Gastrocnemius medialis (tissue), 4 donors: ENCODE measurements at regions of chr2 and their contacts with region 1.

Region 1: DNA sequence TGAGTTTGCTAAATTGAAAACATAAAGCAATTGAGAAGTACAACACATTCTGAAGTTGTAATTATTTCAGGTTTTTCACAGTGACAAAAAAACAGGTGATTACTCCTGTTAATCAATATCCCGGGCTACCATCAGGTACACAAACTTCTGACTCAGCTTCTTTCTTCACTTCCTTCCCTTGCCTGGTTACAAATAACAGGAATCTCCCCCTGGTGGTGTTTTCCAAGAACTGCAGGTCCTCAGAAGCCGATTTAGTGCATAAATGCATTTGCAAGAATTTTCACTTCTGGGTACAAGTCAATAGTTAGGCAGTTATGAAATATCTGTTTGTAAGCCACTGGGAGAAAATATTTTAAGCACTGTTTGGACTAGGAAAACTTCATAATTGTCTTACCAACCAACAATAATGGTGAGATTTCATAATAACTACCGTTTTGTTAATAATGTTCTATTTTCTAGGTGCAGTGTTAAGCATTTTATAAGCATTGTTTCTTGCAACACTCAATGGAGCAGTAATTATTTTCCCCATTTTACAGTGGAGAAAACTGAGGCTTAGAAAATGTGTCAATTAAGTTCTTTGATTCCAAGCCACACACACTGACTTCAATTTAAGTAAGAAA is 12.4 kb upstream of the GMCL1 start:
- DNase-seq: peak; percentile 65 to 77
- ATAC-seq: peak; percentile 81 to 89
- H3K4me3 ChIP-seq: no peak overlapping the region
- H3K27ac ChIP-seq: no peak overlapping the region
- H3K4me1 ChIP-seq: no peaks in the 10 kb centered on the region
- H3K27me3 ChIP-seq: no peaks in the 10 kb centered on the region
- CTCF ChIP-seq: peak; percentile 93 to 98 (median 95)
- POLR2A ChIP-seq: no peak

Region 2: DNA sequence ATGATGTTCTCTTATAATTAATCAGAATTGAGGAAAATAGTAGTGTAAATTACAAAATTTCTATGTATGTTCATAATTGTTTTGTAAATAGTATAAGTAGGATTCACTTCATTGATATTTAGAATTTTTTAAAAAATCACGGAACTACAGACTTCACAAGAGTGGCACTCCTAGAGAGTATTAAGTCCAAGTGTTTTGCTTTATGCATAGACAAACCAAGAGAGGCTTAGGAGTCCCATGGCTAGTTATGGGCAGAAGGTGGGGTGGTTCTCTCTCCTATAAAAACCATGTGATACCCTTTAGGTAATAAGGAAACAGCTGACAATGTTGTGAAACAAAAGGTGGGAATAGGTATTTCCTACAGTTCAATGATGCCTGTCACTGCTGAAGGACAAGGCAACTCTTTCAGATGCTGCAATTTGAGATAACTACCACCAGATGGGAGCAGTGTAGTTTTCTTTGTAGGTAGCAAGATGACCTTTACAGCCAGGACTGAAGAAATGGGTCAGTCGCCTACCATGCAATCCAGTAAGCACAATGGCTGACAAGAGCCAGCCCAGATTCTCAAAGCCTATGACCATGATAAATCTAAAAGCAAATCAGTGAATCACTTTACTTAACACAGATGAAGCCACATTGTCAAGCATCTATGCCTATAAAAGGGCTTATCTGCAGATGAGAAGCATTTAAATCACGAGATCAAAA is 257.4 kb before region 1 on chr2:
- in situ Hi-C with region 1: loop called in 3 of 4 experiments (anchors 5 to 25 kb)
- intact Hi-C with region 1: loop called (anchors 5 kb)
- DNase-seq: peak in 1 of 2 donors; percentile 53
- ATAC-seq: peak; percentile 95 to 97
- H3K4me3 ChIP-seq: no peak overlapping the region
- H3K27ac ChIP-seq: peak overlapping the region in 3 of 4 donors; percentile 10 to 33 (median 11)
- H3K4me1 ChIP-seq: peaks cover 20 to 54% of the 10 kb centered on the region in 2 donors
- H3K27me3 ChIP-seq: no peaks in the 10 kb centered on the region
- CTCF ChIP-seq: peak; percentile 75 to 85 (median 78)
- POLR2A ChIP-seq: no peak

Region 3: GRCh38 chr2:69565431-69565839 is 251.6 kb before region 1 on chr2:
- in situ Hi-C with region 1: loop called in 2 of 4 experiments (anchors 25 kb)
- intact Hi-C with region 1: no loop called
- DNase-seq: peak in 1 of 2 donors; percentile 22
- ATAC-seq: peak in 1 of 2 donors; percentile 35
- H3K4me3 ChIP-seq: no peak overlapping the region
- H3K27ac ChIP-seq: no peak overlapping the region
- H3K4me1 ChIP-seq: peaks cover 27 to 80% of the 10 kb centered on the region in 2 donors
- H3K27me3 ChIP-seq: no peaks in the 10 kb centered on the region
- CTCF ChIP-seq: peak; percentile 28 to 67 (median 45)
- POLR2A ChIP-seq: no peak

Region 4: GRCh38 chr2:69724540-69725159 is 92.4 kb before region 1 on chr2:
- in situ Hi-C with region 1: loop called (anchors 5 kb)
- intact Hi-C with region 1: loop called (anchors 1 kb)
- DNase-seq: peak; percentile 64 to 73
- ATAC-seq: peak; percentile 92 to 96
- H3K4me3 ChIP-seq: peak overlapping the region; percentile 33 to 53 (median 40)
- H3K27ac ChIP-seq: no peak overlapping the region
- H3K4me1 ChIP-seq: peaks cover 5 to 7% of the 10 kb centered on the region in 2 donors
- H3K27me3 ChIP-seq: no peaks in the 10 kb centered on the region
- CTCF ChIP-seq: peak; percentile 94 to 96 (median 96)
- POLR2A ChIP-seq: no peak

Region 5: GRCh38 chr2:69741619-69742466 is 75.2 kb before region 1 on chr2 and contains the start of gene ANXA4:
- in situ Hi-C with region 1: no loop called
- intact Hi-C with region 1: loop called (anchors 5 kb)
- DNase-seq: peak; percentile 82
- ATAC-seq: peak; percentile 84 to 92
- H3K4me3 ChIP-seq: peak within 1 kb of the TSS; percentile 73 to 96 (median 88)
- H3K27ac ChIP-seq: peak within 1 kb of the TSS; percentile 84 to 98 (median 92)
- H3K4me1 ChIP-seq: peaks cover 14 to 19% of the 10 kb centered on the region in 2 donors
- H3K27me3 ChIP-seq: no peaks in the 10 kb centered on the region
- CTCF ChIP-seq: peak in 2 of 5 experiments; percentile 10 to 19
- POLR2A ChIP-seq: peak; percentile 87 to 88
- total RNA-seq, gene ANXA4: 10.7 to 17.0 (median 15.8) TPM

Region 6: DNA sequence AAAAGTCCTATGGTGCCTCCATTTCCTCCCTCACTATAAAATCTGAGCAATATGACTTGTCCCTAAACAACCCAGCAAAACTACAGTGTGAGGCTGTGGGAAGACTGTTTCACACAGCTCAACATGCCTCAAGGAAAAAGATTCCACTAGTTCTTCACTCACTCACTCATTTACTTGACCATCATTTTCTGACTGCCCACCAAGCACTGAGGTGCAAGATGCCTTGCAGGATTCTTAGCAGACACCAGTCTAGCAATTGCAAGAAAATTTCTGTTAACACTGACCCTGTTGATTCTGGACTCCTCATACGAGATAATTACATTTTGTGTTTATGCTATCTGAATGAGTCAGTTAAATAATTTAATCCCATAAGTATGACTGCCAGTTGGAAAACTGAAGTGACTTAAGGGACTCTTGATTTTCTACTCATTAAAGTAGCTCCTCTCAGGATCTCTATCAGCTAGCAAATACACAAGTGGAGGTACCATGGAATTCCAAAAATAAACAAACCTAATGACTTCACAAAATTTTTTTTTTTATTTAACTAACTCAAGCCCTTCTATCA is 218.4 kb after region 1 on chr2:
- in situ Hi-C with region 1: no loop called
- intact Hi-C with region 1: no loop called
- DNase-seq: no peak
- ATAC-seq: no peak
- H3K4me3 ChIP-seq: no peak overlapping the region
- H3K27ac ChIP-seq: peak overlapping the region in 3 of 4 donors; percentile 11 to 41 (median 41)
- H3K4me1 ChIP-seq: peaks cover 15 to 24% of the 10 kb centered on the region in 2 donors
- H3K27me3 ChIP-seq: no peaks in the 10 kb centered on the region
- CTCF ChIP-seq: no peak
- POLR2A ChIP-seq: no peak

Region 7: DNA sequence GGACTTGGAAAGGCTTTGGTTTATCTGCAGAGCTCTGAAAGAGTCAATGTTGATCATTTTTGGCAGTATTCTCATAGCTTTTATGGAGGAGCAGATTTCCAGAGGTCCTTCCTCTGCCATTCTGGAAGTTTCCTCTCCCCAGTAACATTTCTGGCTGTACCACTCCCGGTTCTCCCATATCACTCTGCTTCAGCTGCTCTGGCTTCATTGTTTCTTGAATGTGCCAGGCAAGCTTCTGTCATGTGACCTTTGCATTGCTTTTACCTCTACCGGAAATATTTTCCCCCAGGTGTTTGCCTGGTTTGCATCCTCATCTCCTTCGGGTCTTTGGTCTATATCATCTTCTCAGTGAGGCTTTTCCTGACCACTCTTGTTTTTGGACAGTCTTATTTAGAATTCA is 453.3 kb after region 1 on chr2:
- in situ Hi-C with region 1: no loop called
- intact Hi-C with region 1: no loop called
- DNase-seq: no peak
- ATAC-seq: no peak
- H3K4me3 ChIP-seq: no peak overlapping the region
- H3K27ac ChIP-seq: peak overlapping the region in 2 of 4 donors; percentile 54 to 77
- H3K4me1 ChIP-seq: peaks cover 0 to 10% of the 10 kb centered on the region in 2 donors
- H3K27me3 ChIP-seq: no peaks in the 10 kb centered on the region
- CTCF ChIP-seq: no peak
- POLR2A ChIP-seq: no peak